Mammary epithelial cell (primary cell): ENCODE measurements at regions of chr11 and their contacts with region 1.

Region 1: DNA sequence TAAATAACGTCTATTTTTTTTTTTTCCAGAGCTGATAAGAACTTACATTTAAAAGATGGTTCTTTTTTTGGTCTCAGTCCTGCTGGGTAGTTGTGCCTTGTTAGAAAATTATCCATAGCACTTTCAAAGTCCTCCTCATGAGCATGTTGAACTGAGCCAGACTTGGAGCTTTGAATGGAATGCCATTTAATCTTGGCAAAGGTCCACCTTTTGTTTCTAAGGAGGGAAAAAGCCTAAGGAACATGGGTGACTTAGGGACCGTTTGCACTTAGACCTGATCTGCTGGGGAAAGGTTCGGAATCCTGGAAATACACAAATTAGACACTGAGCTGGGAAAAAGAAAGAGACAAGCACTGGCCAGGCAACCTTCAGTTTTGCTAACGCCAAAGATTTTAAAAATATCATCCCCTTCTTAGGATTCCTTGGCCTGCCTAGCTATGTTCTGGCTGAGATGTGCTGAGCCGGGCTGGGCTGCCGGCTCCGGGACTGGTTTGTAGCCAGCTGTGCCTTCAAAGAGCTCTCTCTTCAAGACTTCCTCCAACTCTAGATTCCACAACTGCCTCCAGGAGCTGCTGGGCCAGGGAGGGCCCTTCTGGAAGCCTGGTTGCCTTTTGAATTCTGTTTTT is 67.4 kb downstream of the ENDOD1 start:
- DNase-seq: no peak
- H3K4me3 ChIP-seq: no peak overlapping the region
- H3K27ac ChIP-seq: no peak overlapping the region
- H3K4me1 ChIP-seq: peaks cover 15% of the 10 kb centered on the region
- H3K27me3 ChIP-seq: no peaks in the 10 kb centered on the region
- CTCF ChIP-seq: no peak

Region 2: GRCh38 chr11:95764267-95764898 is 607.4 kb after region 1 on chr11:
- CTCF ChIA-PET with region 1: no interaction called
- dilution Hi-C with region 1: no loop called
- in situ Hi-C with region 1: loop called (anchors 5 kb)
- intact Hi-C with region 1: loop called (anchors 1 kb)
- DNase-seq: peak; percentile 37
- H3K4me3 ChIP-seq: no peak overlapping the region
- H3K27ac ChIP-seq: no peak overlapping the region
- H3K4me1 ChIP-seq: peaks cover 8% of the 10 kb centered on the region
- H3K27me3 ChIP-seq: no peaks in the 10 kb centered on the region
- CTCF ChIP-seq: peak; percentile 45 to 61